CD14-positive monocyte (primary cell): ENCODE measurements at regions of chr7 and their contacts with region 1.

Region 1: DNA sequence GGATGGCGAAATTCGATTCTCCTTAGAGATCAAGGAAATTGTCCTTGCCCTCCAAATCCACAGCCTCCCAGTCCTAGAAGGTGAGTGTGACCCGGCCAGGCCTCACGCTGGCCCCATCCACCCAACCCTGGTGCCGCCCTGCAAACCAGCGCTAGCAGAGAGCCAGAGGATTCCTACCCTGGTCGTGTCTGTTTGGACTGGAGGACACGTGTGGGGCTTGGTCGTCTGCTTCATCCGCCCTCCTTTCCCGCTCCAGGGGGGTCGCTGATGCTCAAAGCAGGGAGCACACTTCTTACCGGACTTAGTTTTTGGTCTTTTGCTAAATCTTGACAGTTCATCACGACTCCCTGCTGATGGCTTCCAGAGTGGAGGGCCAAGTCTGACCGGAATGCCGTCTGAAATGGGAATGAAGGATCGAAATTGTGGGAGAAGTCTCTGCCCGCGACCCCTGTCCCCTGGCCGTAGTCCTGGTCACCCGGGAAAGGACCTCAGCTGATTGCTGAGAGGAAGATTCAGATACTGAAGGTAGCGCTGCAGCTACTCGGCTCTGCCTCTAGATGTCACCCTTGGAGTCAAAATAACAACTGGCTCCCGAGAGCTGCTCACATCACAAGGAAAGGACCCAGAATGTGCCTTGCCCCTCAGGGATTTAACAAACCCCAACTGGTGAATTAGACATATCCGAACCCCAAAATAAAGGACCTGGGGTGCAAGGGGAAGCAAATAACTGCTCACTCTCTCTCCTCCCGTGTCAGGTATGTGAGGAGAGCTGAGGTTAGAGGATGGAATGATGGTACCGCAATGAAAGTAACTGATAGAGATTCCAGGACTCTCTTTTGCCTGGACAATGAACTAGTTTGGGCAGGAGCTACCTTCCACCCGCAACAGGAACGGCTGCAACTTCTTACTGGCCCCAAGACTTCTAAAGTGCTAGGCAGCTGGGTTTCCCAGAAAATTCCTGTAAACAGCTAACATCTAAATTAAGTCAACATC is 23.5 kb upstream of the ORC5 start:
- DNase-seq: peak; percentile 8 to 38 (median 27)
- H3K4me3 ChIP-seq: no peak overlapping the region
- H3K4me3 Mint-ChIP-seq: no peak overlapping the region
- H3K27ac ChIP-seq: no peak overlapping the region
- H3K27ac Mint-ChIP-seq: no peak overlapping the region
- H3K4me1 ChIP-seq: no peaks in the 10 kb centered on the region
- H3K4me1 Mint-ChIP-seq: peaks cover 2% of the 10 kb centered on the region
- H3K27me3 ChIP-seq: peaks cover 2 to 4% of the 10 kb centered on the region in 2 donors
- H3K27me3 Mint-ChIP-seq: peaks cover 0 to 12% (median 6%) of the 10 kb centered on the region in 3 donors
- CTCF ChIP-seq: peak; percentile 80

Region 2: DNA sequence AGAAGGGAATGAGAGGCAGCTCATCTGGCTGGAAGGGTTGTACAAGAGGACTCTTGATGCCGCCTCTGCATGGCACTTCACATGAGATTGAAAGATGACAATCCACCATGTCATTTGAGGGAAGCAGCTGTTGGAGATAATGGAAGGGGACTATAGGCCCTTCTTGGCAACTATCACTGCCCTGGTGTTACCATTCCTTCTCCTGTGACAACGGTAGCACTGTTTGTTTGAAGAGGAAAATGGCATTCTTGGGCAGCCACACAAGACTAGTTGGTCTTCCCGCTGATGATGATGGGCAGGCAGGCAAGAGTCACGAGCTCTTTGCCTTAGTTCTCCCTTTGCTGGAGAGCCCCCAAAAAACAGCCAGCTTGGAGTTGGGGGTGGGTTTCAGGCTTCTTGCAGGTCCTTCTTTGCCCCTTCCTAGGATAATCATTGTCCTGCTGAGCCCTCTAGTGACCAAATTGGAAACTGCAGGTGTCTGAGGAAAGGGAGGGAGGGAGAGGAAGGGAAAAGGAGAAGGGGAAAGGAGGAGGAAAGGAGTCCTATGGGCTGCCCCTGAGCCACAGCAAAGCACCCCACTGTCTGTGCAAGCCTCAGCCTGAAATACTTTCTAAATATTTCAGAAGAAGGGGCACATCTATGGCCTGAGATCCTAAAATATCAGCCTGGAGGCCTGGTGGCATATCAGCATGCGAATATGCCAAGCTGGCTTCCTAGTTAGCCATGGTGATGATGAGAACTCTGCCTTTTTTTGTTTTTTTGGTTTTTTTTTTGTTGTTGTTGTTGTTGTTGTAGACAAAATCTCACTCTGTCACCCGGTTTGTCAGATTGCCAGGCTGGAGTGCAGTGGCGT is 617.0 kb after region 1 on chr7:
- intact Hi-C with region 1: loop called in 1 of 2 experiments (anchors 5 kb)
- DNase-seq: peak; percentile 8 to 36 (median 21)
- H3K4me3 ChIP-seq: no peak overlapping the region
- H3K4me3 Mint-ChIP-seq: no peak overlapping the region
- H3K27ac ChIP-seq: no peak overlapping the region
- H3K27ac Mint-ChIP-seq: no peak overlapping the region
- H3K4me1 ChIP-seq: no peaks in the 10 kb centered on the region
- H3K4me1 Mint-ChIP-seq: no peaks in the 10 kb centered on the region
- H3K27me3 ChIP-seq: peaks cover 0 to 4% of the 10 kb centered on the region in 2 donors
- H3K27me3 Mint-ChIP-seq: peaks cover 3 to 5% (median 4%) of the 10 kb centered on the region in 3 donors
- CTCF ChIP-seq: peak; percentile 89